Vagina (tissue), 2 donors: ENCODE measurements at regions of chr18 and their contacts with region 1.

Region 1: GRCh38 chr18:10519999-10520935 is 5.6 kb upstream of the NAPG start:
- DNase-seq: no peak
- H3K4me3 ChIP-seq: no peak overlapping the region
- H3K27ac ChIP-seq: peak overlapping the region; percentile 58
- H3K4me1 ChIP-seq: peaks cover 27% of the 10 kb centered on the region
- H3K27me3 ChIP-seq: no peaks in the 10 kb centered on the region
- CTCF ChIP-seq: peak in 2 of 3 experiments; percentile 49 to 88
- POLR2A ChIP-seq: no peak

Region 2: DNA sequence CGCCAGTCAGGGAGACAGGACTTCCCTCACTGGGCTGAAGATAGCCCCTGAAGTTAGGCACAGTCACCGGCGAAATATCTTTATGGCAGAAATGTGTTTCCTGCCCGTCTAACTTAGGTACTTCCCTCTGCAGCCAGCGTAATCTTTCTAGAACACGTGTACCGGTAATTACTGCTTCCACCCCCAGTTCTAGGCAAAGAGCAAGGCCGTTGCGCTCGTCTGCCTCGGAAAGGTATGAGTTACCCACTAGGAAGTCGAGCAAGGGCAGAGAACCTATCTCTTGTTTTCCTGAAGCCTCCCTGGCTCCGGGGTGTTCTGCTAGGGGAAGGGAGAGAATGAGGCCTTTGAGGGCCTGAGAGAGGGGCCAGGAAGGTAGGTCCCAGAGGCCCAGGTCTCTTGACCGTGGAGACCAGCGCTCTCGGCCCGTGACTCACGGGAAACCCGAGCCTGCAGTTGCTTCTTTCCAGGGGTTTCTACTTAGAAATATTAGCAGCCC is 1115.7 kb before region 1 on chr18:
- intact Hi-C with region 1: no loop called
- DNase-seq: no peak
- H3K4me3 ChIP-seq: no peak overlapping the region
- H3K27ac ChIP-seq: no peak overlapping the region
- H3K4me1 ChIP-seq: no peaks in the 10 kb centered on the region
- H3K27me3 ChIP-seq: no peaks in the 10 kb centered on the region
- CTCF ChIP-seq: no peak
- POLR2A ChIP-seq: no peak

Region 3: GRCh38 chr18:9971313-9971920 is 548.9 kb before region 1 on chr18:
- intact Hi-C with region 1: loop called (anchors 5 kb)
- DNase-seq: no peak
- H3K4me3 ChIP-seq: no peak overlapping the region
- H3K27ac ChIP-seq: no peak overlapping the region
- H3K4me1 ChIP-seq: peaks cover 10% of the 10 kb centered on the region
- H3K27me3 ChIP-seq: no peaks in the 10 kb centered on the region
- CTCF ChIP-seq: peak; percentile 78 to 88 (median 80)
- POLR2A ChIP-seq: no peak

Region 4: DNA sequence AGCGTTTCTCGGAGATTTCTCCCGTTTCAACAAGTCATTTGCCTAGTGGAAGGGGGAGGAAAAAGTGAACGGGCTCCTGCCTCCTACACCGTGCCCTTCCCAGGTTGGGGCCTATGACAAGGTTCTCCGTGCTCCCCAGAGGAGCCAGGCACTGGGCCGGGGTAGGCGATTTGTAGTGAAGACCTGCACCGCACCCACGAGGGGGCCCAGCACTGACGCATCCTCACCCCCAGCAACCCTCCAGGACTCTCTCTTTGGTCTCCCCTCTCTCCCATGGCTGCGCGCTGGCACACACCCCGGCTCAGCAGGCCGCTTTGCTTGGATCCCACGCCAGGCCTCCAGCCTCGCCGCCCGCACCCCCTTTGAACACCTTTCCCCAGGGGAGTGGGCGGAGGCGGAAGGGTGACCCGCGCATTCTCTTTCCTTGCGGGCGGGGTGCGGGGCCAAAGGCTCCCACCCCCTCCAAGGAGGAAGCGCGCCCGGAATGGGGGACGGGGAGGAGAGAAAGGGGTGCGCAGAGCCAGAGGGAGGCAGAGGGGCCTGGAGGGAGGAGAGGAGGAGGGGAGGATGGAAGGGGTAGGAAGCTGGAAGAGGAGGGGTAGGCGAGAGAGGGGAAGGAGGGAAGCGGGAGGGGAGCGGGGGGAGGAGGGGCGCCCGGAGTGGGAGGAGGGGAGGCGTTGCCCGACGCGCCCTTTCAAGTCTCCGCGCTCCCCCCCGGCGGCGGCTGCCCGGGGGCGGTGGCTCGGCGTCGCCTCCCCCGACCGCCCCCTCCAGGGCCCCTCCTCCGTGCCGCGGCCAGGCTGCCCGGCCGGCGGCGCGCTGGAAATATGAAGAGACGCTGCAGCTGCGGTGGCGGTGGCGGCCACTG is 66.2 kb before region 1 on chr18 and contains the start of gene APCDD1:
- intact Hi-C with region 1: loop called (anchors 10 kb)
- DNase-seq: no peak
- H3K4me3 ChIP-seq: peak within 1 kb of the TSS; percentile 70 to 92
- H3K27ac ChIP-seq: peak within 1 kb of the TSS; percentile 92
- H3K4me1 ChIP-seq: peaks cover 30% of the 10 kb centered on the region
- H3K27me3 ChIP-seq: no peaks in the 10 kb centered on the region
- CTCF ChIP-seq: no peak
- POLR2A ChIP-seq: peak in 1 of 2 donors; percentile 85
- total RNA-seq, gene APCDD1: 110 TPM